Activated CD4-positive, alpha-beta T cell treated with anti-CD3 and anti-CD28 coated beads, Interleukin-2, amount 10 ng/mL, durations not matched to agents 24 days and 14 days (primary cell): ENCODE measurements at regions of chr3 and their contacts with region 1.

Region 1: GRCh38 chr3:50611464-50612233 is at the start of gene CISH:
- DNase-seq: peak; percentile 100
- H3K4me3 Mint-ChIP-seq: peak within 1 kb of the TSS; percentile 93
- H3K27ac Mint-ChIP-seq: peak within 1 kb of the TSS; percentile 98
- H3K4me1 Mint-ChIP-seq: peaks cover 37% of the 10 kb centered on the region
- H3K27me3 Mint-ChIP-seq: no peaks in the 10 kb centered on the region
- total RNA-seq, gene CISH: 359 and 361 TPM in 2 replicates

Region 2: DNA sequence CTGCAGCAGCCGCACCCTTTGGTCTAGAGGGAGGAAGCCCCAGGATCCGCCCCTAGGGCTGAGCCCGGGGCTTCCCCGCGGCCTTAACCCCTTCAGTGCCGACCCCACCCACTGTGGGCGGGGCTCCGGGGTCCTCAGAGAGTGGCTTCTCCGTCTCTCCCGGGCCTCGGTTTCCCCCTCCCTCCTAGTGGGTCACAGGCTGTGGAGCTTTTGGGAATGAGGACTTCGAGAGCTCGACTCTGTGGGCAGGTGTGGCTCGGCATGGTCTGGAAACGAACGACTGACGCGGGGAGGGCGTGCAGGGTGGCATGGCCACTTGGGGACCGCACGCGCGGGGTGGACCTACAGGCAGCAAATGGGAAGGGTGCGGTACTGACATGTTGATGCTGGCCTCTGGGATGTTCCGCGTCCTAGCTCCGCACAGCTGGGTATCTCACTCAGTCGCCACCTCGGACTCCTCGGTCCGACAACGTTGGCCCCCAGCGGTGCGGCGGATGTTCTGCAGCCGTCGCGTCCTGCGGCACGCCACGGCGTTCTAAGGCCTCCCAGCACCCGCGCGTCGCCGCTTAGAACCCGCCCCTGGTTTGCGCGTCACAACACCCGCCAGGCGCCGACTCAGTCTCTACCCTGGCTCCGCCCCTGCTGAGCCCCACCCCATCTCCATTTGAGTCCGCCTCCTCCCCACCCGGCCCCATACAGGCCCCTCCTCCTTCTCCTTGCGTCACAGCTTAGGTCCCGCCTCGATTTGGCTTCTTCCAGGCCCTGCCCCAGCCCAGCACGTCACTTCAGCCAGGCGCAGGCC is 312.6 kb before region 1 on chr3 and contains the starts of genes HYAL3 and NAA80:
- intact Hi-C with region 1: loop called (anchors 5 kb)
- DNase-seq: peak; percentile 100
- H3K4me3 Mint-ChIP-seq: peak within 1 kb of the TSS; percentile 99
- H3K27ac Mint-ChIP-seq: peak within 1 kb of the TSS; percentile 98
- H3K4me1 Mint-ChIP-seq: peaks cover 22% of the 10 kb centered on the region
- H3K27me3 Mint-ChIP-seq: no peaks in the 10 kb centered on the region
- total RNA-seq, gene HYAL3: 7.1 and 7.3 TPM in 2 replicates
- total RNA-seq, gene NAA80: 17.3 and 20.0 TPM in 2 replicates

Region 3: GRCh38 chr3:50568947-50569749 is 42.5 kb before region 1 on chr3 and contains the start of gene HEMK1:
- intact Hi-C with region 1: loop called (anchors 1 kb)
- DNase-seq: peak; percentile 98
- H3K4me3 Mint-ChIP-seq: peak within 1 kb of the TSS; percentile 98
- H3K27ac Mint-ChIP-seq: peak within 1 kb of the TSS; percentile 99
- H3K4me1 Mint-ChIP-seq: peaks cover 68% of the 10 kb centered on the region
- H3K27me3 Mint-ChIP-seq: no peaks in the 10 kb centered on the region
- total RNA-seq, gene HEMK1: 62.9 and 66.0 TPM in 2 replicates

Region 4: GRCh38 chr3:50623840-50624474 is 12.3 kb after region 1 on chr3:
- intact Hi-C with region 1: loop called (anchors 1 kb)
- DNase-seq: peak; percentile 82
- H3K4me3 Mint-ChIP-seq: peak overlapping the region; percentile 83
- H3K27ac Mint-ChIP-seq: peak overlapping the region; percentile 85
- H3K4me1 Mint-ChIP-seq: peaks cover 87% of the 10 kb centered on the region
- H3K27me3 Mint-ChIP-seq: no peaks in the 10 kb centered on the region

Region 5: DNA sequence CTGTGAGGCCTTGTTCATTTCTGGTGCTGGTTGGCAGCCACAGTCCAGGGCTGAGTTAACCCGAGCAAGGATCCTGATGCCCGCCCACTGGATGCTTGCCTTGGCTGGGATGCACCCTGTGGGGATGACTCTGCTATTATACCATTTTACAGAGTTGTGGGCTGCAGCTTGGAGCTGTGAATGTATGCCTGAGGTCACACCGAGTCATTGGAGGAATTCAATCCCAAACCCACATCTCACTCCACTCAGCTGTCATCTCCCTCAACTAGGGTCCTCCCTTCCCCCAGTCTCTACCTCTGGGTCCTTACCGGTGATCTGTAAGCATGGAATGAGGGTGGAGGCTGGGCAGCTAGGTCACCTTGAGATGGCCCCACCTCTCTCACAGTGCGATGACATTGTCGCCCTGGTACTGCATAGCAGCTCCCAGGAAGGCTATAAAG is 27.4 kb after region 1 on chr3:
- intact Hi-C with region 1: no loop called
- DNase-seq: no peak
- H3K4me3 Mint-ChIP-seq: no peak overlapping the region
- H3K27ac Mint-ChIP-seq: no peak overlapping the region
- H3K4me1 Mint-ChIP-seq: peaks cover 39% of the 10 kb centered on the region
- H3K27me3 Mint-ChIP-seq: no peaks in the 10 kb centered on the region

Region 6: DNA sequence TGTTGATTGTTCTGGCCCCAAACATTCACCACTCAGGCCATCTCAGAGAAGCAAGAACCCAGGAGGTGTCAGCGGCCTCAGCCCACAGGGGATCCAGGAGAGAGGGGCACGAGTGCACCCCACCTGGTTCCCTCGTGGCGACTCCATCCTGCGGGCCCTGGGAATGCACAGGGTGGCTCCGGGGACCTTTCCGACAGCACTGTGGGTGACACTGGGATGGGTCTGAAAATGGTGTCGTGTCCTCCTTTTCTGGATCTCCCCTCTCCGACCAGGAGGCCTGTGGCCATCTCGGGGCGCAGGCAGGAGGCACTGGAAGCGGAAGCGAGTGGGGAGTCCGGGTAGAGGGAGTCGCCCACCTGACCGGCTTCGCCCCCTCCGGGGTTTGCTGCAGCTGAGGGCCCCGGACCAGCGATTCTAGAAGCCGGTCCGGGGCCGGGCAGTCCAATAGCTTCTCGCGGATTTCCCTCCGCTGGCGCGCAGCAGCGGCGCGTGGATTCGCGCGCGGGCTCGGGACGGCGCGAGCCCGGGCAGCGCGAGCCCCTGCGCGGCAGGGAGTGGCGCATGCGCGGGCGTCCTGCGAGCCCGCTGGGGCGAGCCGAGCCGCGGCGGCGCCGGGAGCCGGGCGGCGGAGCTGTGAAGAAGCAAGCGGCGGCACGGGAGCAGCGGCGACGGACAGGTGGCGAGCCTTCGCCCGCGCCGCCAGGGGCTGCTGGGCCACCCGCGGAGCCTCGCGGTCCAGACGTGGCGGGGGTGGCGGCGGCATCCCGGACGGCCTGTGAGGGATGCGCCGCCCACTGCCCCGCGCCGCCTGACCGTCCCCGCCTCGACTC is 62.9 kb after region 1 on chr3 and contains the start of gene DOCK3:
- intact Hi-C with region 1: loop called (anchors 2 kb)
- DNase-seq: peak; percentile 92
- H3K4me3 Mint-ChIP-seq: peak within 1 kb of the TSS; percentile 76
- H3K27ac Mint-ChIP-seq: peak within 1 kb of the TSS; percentile 40
- H3K4me1 Mint-ChIP-seq: peaks cover 10% of the 10 kb centered on the region
- H3K27me3 Mint-ChIP-seq: peaks cover 58% of the 10 kb centered on the region
- total RNA-seq, gene DOCK3: 1.7 and 1.8 TPM in 2 replicates

Region 7: DNA sequence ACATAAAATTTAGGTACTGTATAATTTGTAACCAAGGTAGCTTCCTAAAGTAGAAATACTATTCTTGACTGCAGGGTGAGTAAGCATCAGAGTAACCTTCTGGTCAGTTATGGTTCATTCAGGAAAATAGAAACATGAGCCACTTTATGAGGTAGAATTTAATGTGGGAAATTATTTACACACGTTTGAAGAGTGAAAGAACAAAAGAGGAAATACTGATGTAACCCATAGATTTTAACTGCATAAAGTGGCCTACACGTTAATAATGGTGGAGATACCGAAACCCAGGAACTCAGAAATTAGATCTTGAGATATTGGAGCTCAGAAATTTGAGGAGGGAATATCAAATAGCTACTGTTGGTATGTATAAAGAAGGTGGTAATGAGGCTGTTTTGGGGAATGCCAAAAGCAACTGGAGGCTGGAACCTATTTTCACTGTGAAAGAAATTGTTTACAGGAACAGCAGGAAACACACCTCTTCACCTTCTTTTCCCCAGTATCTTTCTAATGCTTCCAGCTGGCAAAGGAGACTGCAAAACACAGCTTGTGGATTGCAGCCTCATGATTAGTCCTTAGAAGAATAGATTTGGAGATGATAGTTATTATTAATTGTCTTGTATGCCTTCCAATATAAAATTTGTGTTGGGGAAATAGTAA is 279.2 kb after region 1 on chr3:
- intact Hi-C with region 1: no loop called
- DNase-seq: no peak
- H3K4me3 Mint-ChIP-seq: no peak overlapping the region
- H3K27ac Mint-ChIP-seq: no peak overlapping the region
- H3K4me1 Mint-ChIP-seq: no peaks in the 10 kb centered on the region
- H3K27me3 Mint-ChIP-seq: peaks cover 6% of the 10 kb centered on the region

Region 8: GRCh38 chr3:52056968-52057805 is 1445.5 kb after region 1 on chr3:
- intact Hi-C with region 1: loop called (anchors 10 kb)
- DNase-seq: peak; percentile 100
- H3K4me3 Mint-ChIP-seq: peak overlapping the region; percentile 89
- H3K27ac Mint-ChIP-seq: peak overlapping the region; percentile 95
- H3K4me1 Mint-ChIP-seq: peaks cover 34% of the 10 kb centered on the region
- H3K27me3 Mint-ChIP-seq: no peaks in the 10 kb centered on the region